Activated CD4-positive, alpha-beta memory T cell treated with anti-CD3 and anti-CD28 coated beads for 36 hours (primary cell): ENCODE measurements at regions of chr6 and their contacts with region 1.

Region 1: DNA sequence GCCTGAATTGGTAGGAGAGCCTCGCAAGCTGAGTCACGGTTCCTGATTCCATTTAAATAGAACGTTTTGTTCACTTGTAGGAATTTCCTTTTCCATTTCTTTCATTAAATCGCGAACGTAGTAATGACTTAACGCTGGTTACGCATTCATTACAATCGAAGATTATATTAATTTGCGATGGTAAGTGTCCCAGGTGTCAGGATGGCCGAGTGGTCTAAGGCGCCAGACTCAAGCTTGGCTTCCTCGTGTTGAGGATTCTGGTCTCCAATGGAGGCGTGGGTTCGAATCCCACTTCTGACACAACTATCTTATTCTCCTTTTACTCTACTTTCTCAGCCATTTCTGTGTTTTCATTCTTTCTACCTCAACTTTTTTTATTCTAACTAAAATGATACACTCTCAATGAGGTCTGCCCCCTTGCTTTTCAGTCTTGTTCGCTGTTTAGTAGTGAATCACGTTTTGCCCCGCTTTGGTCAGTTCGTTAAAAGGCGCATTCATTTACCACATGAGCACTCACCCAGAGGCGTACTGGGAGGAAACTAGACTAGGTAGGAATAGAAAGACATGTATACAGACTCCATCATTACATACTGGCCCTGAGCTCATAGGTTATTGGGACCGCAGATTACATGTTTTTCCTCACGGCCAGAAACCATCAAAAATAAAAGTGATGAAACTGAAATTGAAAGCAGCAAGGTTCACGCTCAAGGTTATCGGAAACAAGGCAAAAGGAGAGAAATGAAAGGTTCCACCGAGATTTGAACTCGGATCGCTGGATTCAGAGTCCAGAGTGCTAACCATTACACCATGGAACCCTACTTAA is 17.3 kb upstream of the TRIM27 start:
- DNase-seq: peak; percentile 82
- H3K4me3 Mint-ChIP-seq: peak overlapping the region; percentile 84
- H3K27ac Mint-ChIP-seq: peak overlapping the region; percentile 96
- H3K4me1 Mint-ChIP-seq: peaks cover 48% of the 10 kb centered on the region
- H3K27me3 Mint-ChIP-seq: no peaks in the 10 kb centered on the region

Region 2: DNA sequence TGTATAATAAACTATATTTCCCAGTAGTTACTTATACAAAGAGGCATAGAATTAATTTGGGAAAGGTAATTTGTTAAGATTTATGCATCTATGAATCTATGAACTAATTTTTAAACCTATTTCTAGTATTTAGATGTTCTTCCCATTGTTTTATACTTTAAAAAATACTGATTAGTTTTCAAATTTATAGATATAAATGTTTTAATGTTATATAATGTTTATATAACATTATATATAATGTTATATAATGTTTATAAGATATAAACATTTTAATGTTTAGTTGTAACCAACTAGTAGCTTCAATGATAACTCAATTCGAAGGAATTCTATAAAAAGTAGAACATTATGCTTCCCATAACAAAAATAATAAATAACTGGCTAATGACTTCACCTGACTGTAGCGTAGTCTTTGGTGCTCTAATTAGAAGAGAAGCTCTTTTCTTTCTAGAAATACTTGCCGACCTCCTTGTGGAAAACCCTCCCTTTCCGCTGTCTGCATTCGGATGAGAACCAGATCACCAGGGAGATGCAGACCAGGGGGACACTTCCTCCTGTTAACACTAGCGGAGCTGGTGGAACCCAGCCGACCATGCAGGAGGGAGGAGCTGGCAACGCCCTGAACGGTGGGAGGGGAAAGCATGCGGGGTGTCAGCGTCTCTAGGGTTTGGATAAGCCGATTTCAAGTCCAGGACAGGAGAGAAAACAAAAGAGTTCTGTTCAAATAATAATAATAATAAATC is 1187.2 kb before region 1 on chr6:
- CTCF ChIA-PET with region 1: no interaction called
- POLR2A ChIA-PET with region 1: no interaction called
- intact Hi-C with region 1: no loop called
- DNase-seq: peak; percentile 87
- H3K4me3 Mint-ChIP-seq: peak overlapping the region; percentile 83
- H3K27ac Mint-ChIP-seq: peak overlapping the region; percentile 69
- H3K4me1 Mint-ChIP-seq: peaks cover 33% of the 10 kb centered on the region
- H3K27me3 Mint-ChIP-seq: peaks cover 3% of the 10 kb centered on the region

Region 3: DNA sequence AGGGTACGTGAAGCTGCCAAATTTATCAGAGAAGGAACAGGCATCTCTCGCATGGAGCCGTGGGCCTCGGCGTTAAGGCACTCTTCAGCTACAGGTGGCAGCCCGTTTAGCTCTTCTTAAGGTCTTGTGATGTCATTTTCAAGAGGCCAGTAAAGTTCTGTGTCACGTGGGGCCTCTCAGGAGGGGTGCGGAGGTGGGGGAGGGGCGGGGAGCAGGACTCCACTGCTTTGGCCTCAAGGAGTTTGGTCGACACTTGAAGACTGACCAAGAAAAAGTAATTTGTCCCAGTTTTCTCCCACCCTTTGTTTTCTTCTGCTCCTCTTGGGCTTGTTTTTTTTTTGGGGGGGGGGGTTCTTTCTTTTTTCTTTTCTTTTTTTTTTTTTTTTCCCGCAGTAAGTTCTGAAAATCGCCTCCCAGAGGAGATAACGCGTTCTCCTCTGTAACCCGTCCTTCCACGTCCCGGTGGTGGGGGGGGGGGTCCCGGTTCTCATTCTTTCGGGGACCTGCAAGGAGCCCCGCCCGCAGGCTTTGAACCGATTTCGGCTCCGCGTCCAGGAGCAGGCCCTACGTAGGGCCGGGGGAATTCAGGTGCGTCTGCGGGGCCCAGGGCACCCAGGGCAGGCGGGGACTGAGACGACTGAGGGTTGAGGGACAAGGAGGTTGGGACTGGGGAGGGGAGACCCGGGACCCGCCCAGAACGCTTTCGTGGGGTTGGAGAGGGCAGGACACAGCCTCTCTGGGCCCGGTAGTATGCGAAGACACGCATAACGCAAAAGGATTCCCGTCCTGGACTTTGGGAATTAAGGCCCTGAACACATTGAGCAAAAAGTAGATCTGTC is 451.5 kb before region 1 on chr6:
- CTCF ChIA-PET with region 1: no interaction called
- POLR2A ChIA-PET with region 1: no interaction called
- intact Hi-C with region 1: no loop called
- DNase-seq: peak; percentile 66
- H3K4me3 Mint-ChIP-seq: peak overlapping the region; percentile 56
- H3K27ac Mint-ChIP-seq: no peak overlapping the region
- H3K4me1 Mint-ChIP-seq: peaks cover 16% of the 10 kb centered on the region
- H3K27me3 Mint-ChIP-seq: peaks cover 63% of the 10 kb centered on the region

Region 4: GRCh38 chr6:28648035-28648877 is 292.8 kb before region 1 on chr6:
- CTCF ChIA-PET with region 1: no interaction called
- POLR2A ChIA-PET with region 1: no interaction called
- intact Hi-C with region 1: loop called (anchors 10 kb)
- DNase-seq: peak; percentile 71
- H3K4me3 Mint-ChIP-seq: peak overlapping the region; percentile 83
- H3K27ac Mint-ChIP-seq: no peak overlapping the region
- H3K4me1 Mint-ChIP-seq: peaks cover 10% of the 10 kb centered on the region
- H3K27me3 Mint-ChIP-seq: peaks cover 56% of the 10 kb centered on the region

Region 5: DNA sequence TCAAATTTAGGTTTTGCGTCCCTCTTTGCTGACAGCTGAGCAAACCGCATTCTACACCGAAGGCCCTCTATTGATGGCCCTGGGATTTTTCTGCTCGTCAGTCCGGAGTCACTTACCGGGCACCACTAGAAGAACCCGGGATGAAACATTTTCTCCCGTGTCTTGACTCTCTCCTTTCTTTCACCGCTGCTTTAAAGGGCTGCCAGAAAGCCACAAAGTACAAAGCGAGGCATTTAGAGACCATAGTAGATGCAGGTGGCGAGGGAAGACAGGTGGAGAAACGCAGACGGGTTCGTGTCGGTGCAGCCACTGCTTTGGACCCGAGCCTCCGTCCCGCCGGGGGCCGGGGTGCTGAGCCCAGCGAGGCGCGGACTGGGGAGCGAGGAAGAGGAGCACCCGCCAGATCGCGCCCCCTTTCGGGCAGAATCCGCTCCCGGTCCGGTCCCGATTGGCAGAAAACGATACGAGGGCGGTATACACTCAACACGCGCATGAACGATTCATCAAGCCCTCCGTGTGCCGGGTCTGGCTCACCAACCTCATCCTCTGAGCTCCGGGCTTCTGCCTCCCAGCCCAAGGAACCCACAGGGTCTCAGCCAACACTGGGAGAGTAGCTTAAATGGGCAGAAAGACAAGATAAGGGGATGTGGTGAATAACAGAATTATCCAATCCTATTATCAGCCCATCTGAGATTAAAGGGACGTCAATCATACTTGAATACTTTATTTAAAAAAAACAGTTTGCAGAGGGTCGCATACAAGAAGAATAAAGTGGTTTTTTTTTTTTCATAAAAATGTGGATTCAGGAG is 102.2 kb before region 1 on chr6:
- CTCF ChIA-PET with region 1: interaction called, 5 read pairs
- POLR2A ChIA-PET with region 1: no interaction called
- intact Hi-C with region 1: loop called (anchors 1 kb)
- DNase-seq: peak; percentile 91
- H3K4me3 Mint-ChIP-seq: peak overlapping the region; percentile 86
- H3K27ac Mint-ChIP-seq: peak overlapping the region; percentile 85
- H3K4me1 Mint-ChIP-seq: peaks cover 14% of the 10 kb centered on the region
- H3K27me3 Mint-ChIP-seq: peaks cover 16% of the 10 kb centered on the region

Region 6: GRCh38 chr6:28856620-28857005 is 84.5 kb before region 1 on chr6:
- CTCF ChIA-PET with region 1: no interaction called
- POLR2A ChIA-PET with region 1: no interaction called
- intact Hi-C with region 1: no loop called
- DNase-seq: no peak
- H3K4me3 Mint-ChIP-seq: no peak overlapping the region
- H3K27ac Mint-ChIP-seq: no peak overlapping the region
- H3K4me1 Mint-ChIP-seq: no peaks in the 10 kb centered on the region
- H3K27me3 Mint-ChIP-seq: peaks cover 2% of the 10 kb centered on the region

Region 7: GRCh38 chr6:28880894-28881780 is 59.9 kb before region 1 on chr6:
- CTCF ChIA-PET with region 1: interaction called, 3 read pairs
- POLR2A ChIA-PET with region 1: no interaction called
- intact Hi-C with region 1: loop called (anchors 1 kb)
- DNase-seq: peak; percentile 78
- H3K4me3 Mint-ChIP-seq: peak overlapping the region; percentile 65
- H3K27ac Mint-ChIP-seq: peak overlapping the region; percentile 24
- H3K4me1 Mint-ChIP-seq: peaks cover 28% of the 10 kb centered on the region
- H3K27me3 Mint-ChIP-seq: peaks cover 14% of the 10 kb centered on the region

Region 8: DNA sequence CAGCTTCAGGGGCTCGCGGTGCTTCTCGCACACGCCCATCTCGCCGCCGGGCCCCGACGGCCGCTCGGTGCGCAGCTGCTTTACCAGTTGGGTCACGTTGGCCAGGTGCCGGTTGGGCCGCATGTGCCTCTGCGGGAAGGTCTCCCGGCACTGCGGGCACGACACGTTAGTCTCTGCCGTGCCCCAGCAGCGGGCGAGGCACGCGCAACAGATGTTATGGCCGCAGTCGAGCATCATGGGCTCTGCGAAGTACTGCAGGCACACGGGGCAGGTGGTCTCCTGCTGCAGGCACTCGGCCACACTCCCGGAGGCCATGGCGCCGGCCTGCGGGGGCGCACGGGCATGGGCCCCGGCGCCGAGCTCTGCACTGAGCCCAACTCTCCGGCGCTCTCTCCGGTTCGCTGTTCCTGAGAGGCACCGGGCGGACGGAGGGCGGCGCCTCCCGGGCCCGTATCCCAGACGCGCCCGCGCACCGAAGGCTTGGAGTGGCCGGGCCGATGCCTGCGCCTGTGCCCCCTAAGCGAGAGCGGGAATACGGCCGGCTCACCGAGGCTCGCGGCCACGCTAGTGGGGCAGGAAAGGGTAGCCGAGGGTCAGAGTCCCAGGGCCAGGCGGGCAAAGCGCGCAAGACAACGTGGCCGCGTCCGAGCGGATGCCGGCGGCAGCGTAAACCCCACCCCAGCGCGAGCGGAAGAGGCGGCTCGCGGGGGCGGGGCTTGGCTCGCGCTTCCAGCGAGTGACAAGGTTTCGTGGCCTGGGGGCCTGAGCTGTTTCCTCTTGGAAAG is 17.6 kb before region 1 on chr6 and contains the start of gene TRIM27:
- CTCF ChIA-PET with region 1: interaction called, 7 read pairs
- POLR2A ChIA-PET with region 1: interaction called, 19 read pairs
- intact Hi-C with region 1: loop called (anchors 1 kb)
- DNase-seq: peak; percentile 87
- H3K4me3 Mint-ChIP-seq: peak within 1 kb of the TSS; percentile 94
- H3K27ac Mint-ChIP-seq: peak within 1 kb of the TSS; percentile 94
- H3K4me1 Mint-ChIP-seq: peaks cover 38% of the 10 kb centered on the region
- H3K27me3 Mint-ChIP-seq: no peaks in the 10 kb centered on the region
- total RNA-seq, gene TRIM27: 49.7 to 54.6 TPM

Region 9: GRCh38 chr6:28981833-28982475 is 40.9 kb after region 1 on chr6:
- CTCF ChIA-PET with region 1: interaction called, 3 read pairs
- POLR2A ChIA-PET with region 1: no interaction called
- intact Hi-C with region 1: loop called (anchors 1 kb)
- DNase-seq: peak; percentile 80
- H3K4me3 Mint-ChIP-seq: peak overlapping the region; percentile 82
- H3K27ac Mint-ChIP-seq: peak overlapping the region; percentile 93
- H3K4me1 Mint-ChIP-seq: peaks cover 58% of the 10 kb centered on the region
- H3K27me3 Mint-ChIP-seq: peaks cover 27% of the 10 kb centered on the region